ENCODE measurements at regions of chr6 and their contacts with region 1.

Region 1: DNA sequence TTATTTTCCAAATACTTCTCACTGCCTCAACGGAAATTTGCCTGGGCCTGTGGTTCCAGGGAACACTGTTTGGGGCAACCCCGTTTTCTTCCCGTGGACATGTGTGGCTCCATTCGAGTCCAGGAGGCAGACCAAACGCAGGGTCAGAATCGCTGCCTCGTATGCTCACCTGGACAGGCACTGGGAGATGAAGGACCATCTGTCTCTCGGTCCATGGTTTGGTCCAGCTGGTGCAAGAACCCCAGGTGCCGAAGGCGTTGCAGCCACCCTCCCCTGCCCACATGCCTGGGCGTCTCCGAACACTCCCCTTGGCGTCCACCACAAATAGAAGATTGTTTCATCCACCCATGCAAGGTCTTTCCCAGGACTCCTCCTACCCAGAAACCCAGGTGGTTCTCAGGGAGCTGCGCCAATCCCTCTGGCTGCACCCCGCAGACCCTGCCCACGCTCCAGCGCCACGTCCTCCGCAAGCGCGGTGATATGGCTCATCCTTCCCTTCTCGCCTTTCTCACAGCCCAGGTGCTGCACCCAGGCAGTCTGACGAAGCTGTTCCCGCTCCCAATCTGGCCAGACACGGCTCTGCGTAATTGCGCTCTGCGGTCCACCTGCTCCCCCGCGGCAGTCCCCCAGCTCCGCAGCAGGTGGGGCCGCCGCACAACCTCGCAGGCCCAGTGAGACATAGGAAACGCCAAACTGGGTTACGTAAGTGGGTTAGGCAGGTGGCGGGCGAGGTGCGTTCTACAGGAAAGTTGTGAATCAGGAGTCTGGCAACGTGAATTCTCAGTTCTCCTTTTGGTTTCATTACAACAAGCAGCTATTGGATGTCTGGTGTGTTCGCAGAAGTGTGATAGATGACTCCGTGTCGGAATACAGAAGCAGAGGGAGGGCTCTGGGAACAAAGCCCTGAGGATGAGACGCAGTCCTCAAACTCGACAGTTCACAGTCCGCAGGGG is 146.2 kb upstream of the ECI2 start:
- DNase-seq: peak; percentile 91
- ATAC-seq: peak; percentile 96
- H3K4me3 ChIP-seq: peak overlapping the region in 4 of 5 experiments; percentile 16 to 60 (median 37)
- H3K4me3 Mint-ChIP-seq: peak overlapping the region; percentile 81
- H3K27ac ChIP-seq: no peak overlapping the region
- H3K27ac Mint-ChIP-seq: peak overlapping the region; percentile 83
- H3K4me1 ChIP-seq: peaks cover 9 to 16% of the 10 kb centered on the region in 2 donors
- H3K4me1 Mint-ChIP-seq: peaks cover 13% of the 10 kb centered on the region
- H3K27me3 ChIP-seq: peaks cover 0 to 29% (median 6%) of the 10 kb centered on the region in 4 experiments
- H3K27me3 Mint-ChIP-seq: peaks cover 16% of the 10 kb centered on the region
- CTCF ChIP-seq: peak; percentile 68

Region 2: DNA sequence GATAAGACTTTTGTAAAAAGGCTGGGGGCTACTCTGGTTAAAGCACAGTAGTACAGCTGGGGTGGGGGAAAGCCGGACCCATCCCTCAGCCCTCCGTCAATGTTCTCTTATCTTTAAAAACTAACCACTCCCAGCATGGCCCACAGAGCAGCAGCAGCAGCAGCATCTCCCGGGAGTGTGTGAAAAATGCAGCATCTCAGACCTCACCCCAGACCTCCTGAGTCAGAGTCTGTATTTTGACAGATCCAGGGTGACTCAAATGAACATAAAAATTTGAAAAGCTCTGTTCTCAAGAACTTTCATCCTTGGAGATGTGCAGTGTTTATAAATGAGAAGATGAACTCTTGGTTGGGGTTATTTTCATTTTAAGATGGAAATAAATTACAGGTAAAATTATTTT is 131.5 kb after region 1 on chr6:
- CTCF ChIA-PET with region 1: no interaction called
- POLR2A ChIA-PET with region 1: no interaction called
- intact Hi-C with region 1: loop called (anchors 1 kb)
- DNase-seq: no peak
- ATAC-seq: no peak
- H3K4me3 ChIP-seq: no peak overlapping the region
- H3K4me3 Mint-ChIP-seq: no peak overlapping the region
- H3K27ac ChIP-seq: no peak overlapping the region
- H3K27ac Mint-ChIP-seq: no peak overlapping the region
- H3K4me1 ChIP-seq: peaks cover 9 to 11% of the 10 kb centered on the region in 2 donors
- H3K4me1 Mint-ChIP-seq: peaks cover 26% of the 10 kb centered on the region
- H3K27me3 ChIP-seq: no peaks in the 10 kb centered on the region
- H3K27me3 Mint-ChIP-seq: no peaks in the 10 kb centered on the region
- CTCF ChIP-seq: no peak

Region 3: GRCh38 chr6:4906293-4907276 is 625.0 kb after region 1 on chr6:
- CTCF ChIA-PET with region 1: no interaction called
- POLR2A ChIA-PET with region 1: no interaction called
- intact Hi-C with region 1: no loop called
- DNase-seq: no peak
- ATAC-seq: no peak
- H3K4me3 ChIP-seq: peak overlapping the region in 4 of 5 experiments; percentile 2 to 37 (median 31)
- H3K4me3 Mint-ChIP-seq: peak overlapping the region; percentile 64
- H3K27ac ChIP-seq: peak overlapping the region; percentile 41 to 75
- H3K27ac Mint-ChIP-seq: peak overlapping the region; percentile 54
- H3K4me1 ChIP-seq: peaks cover 32 to 37% of the 10 kb centered on the region in 2 donors
- H3K4me1 Mint-ChIP-seq: peaks cover 46% of the 10 kb centered on the region
- H3K27me3 ChIP-seq: no peaks in the 10 kb centered on the region
- H3K27me3 Mint-ChIP-seq: no peaks in the 10 kb centered on the region
- CTCF ChIP-seq: no peak

Region 4: DNA sequence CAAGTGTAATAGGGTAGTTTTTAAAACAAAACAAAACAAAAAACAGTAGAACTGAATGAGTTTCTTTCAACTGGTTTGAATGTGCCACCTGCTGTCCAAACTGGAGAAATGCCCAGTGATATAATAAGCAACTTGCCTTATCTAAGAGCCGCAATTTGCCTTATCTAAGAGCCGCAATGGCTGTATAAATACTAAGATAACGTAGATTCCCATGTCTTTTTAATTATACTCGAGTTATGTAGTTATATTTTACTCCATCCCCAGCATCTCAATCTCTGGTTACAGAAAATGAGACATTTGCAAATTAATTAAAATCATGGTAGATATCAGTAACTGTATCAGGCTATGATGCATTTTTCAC is 655.0 kb after region 1 on chr6:
- CTCF ChIA-PET with region 1: interaction called, 36 read pairs
- POLR2A ChIA-PET with region 1: no interaction called
- intact Hi-C with region 1: loop called (anchors 1 kb)
- DNase-seq: peak; percentile 59
- ATAC-seq: no peak
- H3K4me3 ChIP-seq: no peak overlapping the region
- H3K4me3 Mint-ChIP-seq: no peak overlapping the region
- H3K27ac ChIP-seq: no peak overlapping the region
- H3K27ac Mint-ChIP-seq: peak overlapping the region; percentile 67
- H3K4me1 ChIP-seq: no peaks in the 10 kb centered on the region
- H3K4me1 Mint-ChIP-seq: peaks cover 22% of the 10 kb centered on the region
- H3K27me3 ChIP-seq: no peaks in the 10 kb centered on the region
- H3K27me3 Mint-ChIP-seq: no peaks in the 10 kb centered on the region
- CTCF ChIP-seq: peak; percentile 77

Region 5: GRCh38 chr6:5003604-5004372 is 722.2 kb after region 1 on chr6 and contains the start of gene RPP40:
- CTCF ChIA-PET with region 1: no interaction called
- POLR2A ChIA-PET with region 1: no interaction called
- intact Hi-C with region 1: loop called (anchors 1 kb)
- DNase-seq: peak; percentile 99
- ATAC-seq: peak; percentile 92
- H3K4me3 ChIP-seq: peak within 1 kb of the TSS; percentile 70 to 82 (median 71)
- H3K4me3 Mint-ChIP-seq: peak within 1 kb of the TSS; percentile 98
- H3K27ac ChIP-seq: peak within 1 kb of the TSS; percentile 81 to 90
- H3K27ac Mint-ChIP-seq: peak within 1 kb of the TSS; percentile 99
- H3K4me1 ChIP-seq: peaks cover 6 to 14% of the 10 kb centered on the region in 2 donors
- H3K4me1 Mint-ChIP-seq: peaks cover 10% of the 10 kb centered on the region
- H3K27me3 ChIP-seq: no peaks in the 10 kb centered on the region
- H3K27me3 Mint-ChIP-seq: no peaks in the 10 kb centered on the region
- CTCF ChIP-seq: peak; percentile 82
- total RNA-seq, gene RPP40: 3.8 TPM in 2 replicates